Mucosa of descending colon (tissue), 3 donors: ENCODE measurements at regions of chr3 and their contacts with region 1.

Region 1: DNA sequence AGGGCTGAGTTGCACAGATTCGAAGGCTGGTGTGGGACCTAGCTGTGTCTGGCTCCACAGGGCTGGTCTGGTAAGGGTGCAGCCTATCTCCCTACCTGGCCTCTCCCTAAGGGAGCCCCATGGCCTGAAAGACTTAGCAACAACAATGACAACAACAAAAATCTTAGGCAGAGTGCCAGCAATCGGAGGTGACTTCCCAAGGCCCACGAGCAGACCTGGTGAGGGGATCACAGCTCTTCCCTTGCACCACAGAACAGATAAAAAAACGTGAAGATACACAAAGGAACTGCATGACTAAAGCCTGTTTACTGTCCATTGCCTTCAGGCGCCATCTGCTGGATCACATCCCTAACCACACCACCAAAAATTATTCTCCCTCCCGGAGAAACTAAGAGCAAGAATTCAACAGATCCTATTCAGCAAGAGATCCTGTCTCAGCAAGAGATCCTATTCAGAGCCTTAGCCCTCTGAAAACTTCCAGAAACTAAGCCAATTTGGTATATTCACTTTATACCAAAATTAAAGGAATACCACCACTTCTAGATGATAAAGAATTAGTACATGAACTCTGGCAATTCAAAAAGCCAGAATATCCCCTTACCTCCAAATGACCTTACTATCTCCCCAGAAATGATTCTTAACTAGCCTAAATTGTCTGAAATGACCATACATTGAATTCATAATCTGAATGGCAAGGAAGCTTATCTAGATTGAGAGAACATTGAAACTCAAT is 24.1 kb upstream of the OR5K4 start:
- DNase-seq: peak in 1 of 3 donors; percentile 57
- ATAC-seq: peak; percentile 62
- H3K4me3 ChIP-seq: no peak overlapping the region
- H3K4me1 ChIP-seq: no peaks in the 10 kb centered on the region
- CTCF ChIP-seq: no peak

Region 2: DNA sequence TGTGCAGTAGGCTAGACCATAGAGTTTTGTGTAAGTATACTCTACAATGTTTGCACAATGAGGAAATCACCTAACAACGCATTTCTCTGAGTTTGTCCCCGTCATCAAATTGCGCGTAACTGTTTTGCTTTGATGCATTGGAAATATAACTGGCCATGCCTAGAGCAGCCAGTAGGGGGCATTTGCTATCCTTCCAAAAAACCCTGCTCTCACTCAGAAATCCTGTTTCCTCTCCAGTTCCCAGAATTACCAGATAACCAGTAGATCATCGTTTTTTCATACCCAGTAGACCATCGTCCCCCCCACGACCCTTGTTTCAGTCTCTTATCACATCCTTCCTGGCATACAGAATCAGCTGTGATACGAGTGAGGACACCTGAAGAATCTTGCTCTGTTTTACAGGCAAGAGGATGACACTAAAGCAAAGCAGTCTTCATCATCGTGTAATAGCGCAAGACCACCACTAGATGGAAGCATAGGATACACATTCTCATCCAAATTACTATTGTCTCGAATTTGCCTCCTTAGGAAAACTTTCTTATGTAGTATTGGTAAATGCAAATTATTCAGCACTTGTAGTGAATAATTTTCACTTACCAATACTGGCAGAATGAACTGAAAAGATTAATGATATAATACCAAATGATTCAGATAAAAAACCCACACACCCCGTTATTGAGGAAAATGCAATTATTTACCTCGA is 290.1 kb before region 1 on chr3:
- intact Hi-C with region 1: loop called in 1 of 2 experiments (anchors 5 kb)
- DNase-seq: peak in 1 of 3 donors; percentile 76
- ATAC-seq: peak; percentile 99
- H3K4me3 ChIP-seq: no peak overlapping the region
- H3K4me1 ChIP-seq: no peaks in the 10 kb centered on the region
- CTCF ChIP-seq: peak; percentile 66